Endothelial cell of umbilical vein (primary cell): ENCODE measurements at regions of chr10 and their contacts with region 1.

Region 1: GRCh38 chr10:110395725-110396651 is 91.3 kb upstream of the SMNDC1 start:
- DNase-seq: peak; percentile 99
- H3K4me3 ChIP-seq: no peak overlapping the region
- H3K27ac ChIP-seq: peak overlapping the region; percentile 91
- H3K4me1 ChIP-seq: peaks cover 58% of the 10 kb centered on the region
- H3K27me3 ChIP-seq: no peaks in the 10 kb centered on the region
- CTCF ChIP-seq: no peak
- POLR2A ChIP-seq: peak; percentile 24

Region 2: DNA sequence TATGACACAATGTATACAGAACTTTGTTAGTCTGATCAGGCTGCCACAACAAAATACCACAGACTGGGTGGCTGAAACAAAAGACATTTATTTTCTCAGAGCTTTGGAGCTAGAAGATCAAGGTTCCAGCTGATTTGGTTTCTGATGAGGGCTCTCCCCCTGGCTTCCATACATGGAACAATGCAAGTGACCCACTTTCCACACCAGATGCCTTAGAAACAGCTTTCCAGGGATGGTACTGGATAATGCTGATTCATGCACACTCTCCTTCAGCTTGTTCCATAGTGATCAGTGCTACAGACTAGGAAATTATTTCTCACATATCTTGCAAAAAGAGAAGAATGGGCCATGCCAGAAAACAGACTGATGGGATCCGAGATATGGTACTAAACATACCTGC is 1956.6 kb before region 1 on chr10:
- CTCF ChIA-PET with region 1: no interaction called
- POLR2A ChIA-PET with region 1: no interaction called
- dilution Hi-C with region 1: no loop called
- intact Hi-C with region 1: no loop called
- DNase-seq: no peak
- H3K4me3 ChIP-seq: no peak overlapping the region
- H3K27ac ChIP-seq: no peak overlapping the region
- H3K4me1 ChIP-seq: no peaks in the 10 kb centered on the region
- H3K27me3 ChIP-seq: no peaks in the 10 kb centered on the region
- CTCF ChIP-seq: no peak
- POLR2A ChIP-seq: no peak

Region 3: GRCh38 chr10:110304780-110305421 is 91.1 kb before region 1 on chr10 and contains the start of gene SMNDC1:
- CTCF ChIA-PET with region 1: no interaction called
- POLR2A ChIA-PET with region 1: no interaction called
- dilution Hi-C with region 1: no loop called
- intact Hi-C with region 1: loop called (anchors 1 kb)
- DNase-seq: peak; percentile 99
- H3K4me3 ChIP-seq: peak within 1 kb of the TSS; percentile 95 to 99 (median 99)
- H3K27ac ChIP-seq: peak within 1 kb of the TSS; percentile 97
- H3K4me1 ChIP-seq: peaks cover 47% of the 10 kb centered on the region
- H3K27me3 ChIP-seq: no peaks in the 10 kb centered on the region
- CTCF ChIP-seq: no peak
- POLR2A ChIP-seq: peak; percentile 51
- total RNA-seq, gene SMNDC1: 38.5 and 39.3 TPM in 2 replicates

Region 4: GRCh38 chr10:110345286-110345685 is 50.7 kb before region 1 on chr10:
- CTCF ChIA-PET with region 1: no interaction called
- POLR2A ChIA-PET with region 1: no interaction called
- dilution Hi-C with region 1: no loop called
- intact Hi-C with region 1: no loop called
- DNase-seq: no peak
- H3K4me3 ChIP-seq: no peak overlapping the region
- H3K27ac ChIP-seq: no peak overlapping the region
- H3K4me1 ChIP-seq: no peaks in the 10 kb centered on the region
- H3K27me3 ChIP-seq: peaks cover 0 to 5% of the 10 kb centered on the region in 2 experiments
- CTCF ChIP-seq: no peak
- POLR2A ChIP-seq: no peak

Region 5: DNA sequence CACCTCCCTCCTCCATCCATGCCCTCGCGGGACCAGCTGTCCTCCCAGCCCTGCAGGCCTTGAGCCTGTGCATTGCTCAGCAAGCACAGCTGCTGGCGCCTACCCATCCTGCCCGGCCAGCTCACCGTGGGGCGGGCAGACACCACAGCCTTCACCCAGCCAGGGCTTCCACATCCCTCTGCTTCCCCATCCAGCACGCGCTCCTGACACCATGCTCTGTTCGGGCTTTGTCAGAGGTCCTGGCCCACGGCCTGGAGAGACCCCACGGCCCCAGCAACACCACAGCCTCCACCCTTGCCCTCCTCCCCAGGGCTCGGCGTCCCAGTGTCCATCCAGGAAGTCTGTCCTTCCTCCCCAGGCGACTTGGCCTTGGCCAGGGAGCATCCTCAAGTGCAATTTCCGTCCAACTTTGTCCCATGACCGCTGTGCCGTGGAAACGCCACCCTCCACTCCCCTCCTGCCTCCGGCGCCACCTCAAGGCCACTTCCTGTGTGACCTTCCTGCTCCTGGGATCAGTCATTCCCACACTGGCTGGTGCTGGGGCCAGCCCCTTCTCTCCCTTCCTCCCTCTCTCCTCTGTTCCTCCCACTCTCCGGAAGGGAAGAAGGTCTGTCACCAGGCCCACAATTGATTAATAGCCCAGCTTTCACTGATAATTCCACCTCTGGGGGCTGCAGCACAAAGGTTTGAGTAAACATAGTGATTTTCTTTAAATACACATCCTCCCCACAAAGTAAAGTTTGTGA is 19.8 kb before region 1 on chr10:
- CTCF ChIA-PET with region 1: interaction called, 3 read pairs
- POLR2A ChIA-PET with region 1: no interaction called
- dilution Hi-C with region 1: no loop called
- intact Hi-C with region 1: loop called (anchors 1 kb)
- DNase-seq: peak; percentile 55
- H3K4me3 ChIP-seq: no peak overlapping the region
- H3K27ac ChIP-seq: peak overlapping the region; percentile 31
- H3K4me1 ChIP-seq: peaks cover 36% of the 10 kb centered on the region
- H3K27me3 ChIP-seq: no peaks in the 10 kb centered on the region
- CTCF ChIP-seq: no peak
- POLR2A ChIP-seq: no peak

Region 6: GRCh38 chr10:110446954-110447608 is 51.1 kb after region 1 on chr10:
- CTCF ChIA-PET with region 1: interaction called, 3 read pairs
- POLR2A ChIA-PET with region 1: no interaction called
- dilution Hi-C with region 1: no loop called
- intact Hi-C with region 1: loop called (anchors 1 kb)
- DNase-seq: peak; percentile 87
- H3K4me3 ChIP-seq: no peak overlapping the region
- H3K27ac ChIP-seq: peak overlapping the region; percentile 74
- H3K4me1 ChIP-seq: peaks cover 17% of the 10 kb centered on the region
- H3K27me3 ChIP-seq: no peaks in the 10 kb centered on the region
- CTCF ChIP-seq: no peak
- POLR2A ChIP-seq: no peak

Region 7: DNA sequence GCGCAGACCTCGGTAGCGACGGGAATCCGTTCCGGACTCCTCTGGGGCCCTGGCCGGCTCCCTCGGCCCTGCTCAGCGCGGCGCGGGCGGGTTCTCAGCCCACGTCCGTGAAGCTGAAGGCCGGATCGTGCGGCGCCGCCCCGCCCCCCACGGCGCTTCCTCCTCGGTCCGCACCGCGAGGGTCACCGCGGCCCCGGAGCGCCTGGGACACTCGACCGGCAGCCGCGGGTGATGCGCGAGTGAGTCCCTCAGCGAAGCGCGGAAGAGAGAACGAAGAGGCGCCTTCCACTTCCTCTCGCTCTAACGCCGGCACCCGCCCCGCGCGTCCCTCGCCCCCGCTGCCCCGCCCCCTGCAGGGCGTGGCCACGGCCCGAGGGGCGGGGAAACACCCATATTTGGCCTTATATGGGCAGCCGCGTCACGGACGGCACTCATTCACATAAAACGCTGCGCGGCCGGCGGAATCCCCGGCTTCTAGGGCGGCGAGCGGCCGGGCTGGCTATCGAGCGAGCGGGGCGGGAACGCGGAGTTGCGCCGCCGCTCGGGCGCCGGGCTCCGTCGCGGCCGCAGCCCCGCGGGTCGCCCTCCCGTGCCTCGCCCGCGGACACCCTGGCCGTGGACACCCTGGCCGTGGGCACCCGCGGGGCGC is 101.6 kb after region 1 on chr10 and contains the start of gene DUSP5:
- CTCF ChIA-PET with region 1: interaction called, 8 read pairs
- POLR2A ChIA-PET with region 1: interaction called, 5 read pairs
- dilution Hi-C with region 1: no loop called
- intact Hi-C with region 1: loop called (anchors 1 kb)
- DNase-seq: peak; percentile 96
- H3K4me3 ChIP-seq: peak within 1 kb of the TSS; percentile 58 to 81 (median 77)
- H3K27ac ChIP-seq: peak within 1 kb of the TSS; percentile 94
- H3K4me1 ChIP-seq: peaks cover 48% of the 10 kb centered on the region
- H3K27me3 ChIP-seq: no peaks in the 10 kb centered on the region
- CTCF ChIP-seq: no peak
- POLR2A ChIP-seq: peak; percentile 93
- total RNA-seq, gene DUSP5: 12.2 and 12.6 TPM in 2 replicates

Region 8: GRCh38 chr10:110547139-110547761 is 151.3 kb after region 1 on chr10:
- CTCF ChIA-PET with region 1: interaction called, 5 read pairs
- POLR2A ChIA-PET with region 1: no interaction called
- dilution Hi-C with region 1: no loop called
- intact Hi-C with region 1: loop called (anchors 1 kb)
- DNase-seq: peak; percentile 61
- H3K4me3 ChIP-seq: no peak overlapping the region
- H3K27ac ChIP-seq: no peak overlapping the region
- H3K4me1 ChIP-seq: peaks cover 13% of the 10 kb centered on the region
- H3K27me3 ChIP-seq: peaks cover 1 to 4% of the 10 kb centered on the region in 2 experiments
- CTCF ChIP-seq: peak; percentile 63 to 68
- POLR2A ChIP-seq: no peak

Region 9: GRCh38 chr10:110739811-110740271 is 343.9 kb after region 1 on chr10:
- CTCF ChIA-PET with region 1: no interaction called
- POLR2A ChIA-PET with region 1: no interaction called
- dilution Hi-C with region 1: no loop called
- intact Hi-C with region 1: no loop called
- DNase-seq: no peak
- H3K4me3 ChIP-seq: no peak overlapping the region
- H3K27ac ChIP-seq: no peak overlapping the region
- H3K4me1 ChIP-seq: no peaks in the 10 kb centered on the region
- H3K27me3 ChIP-seq: peaks cover 2 to 7% of the 10 kb centered on the region in 2 experiments
- CTCF ChIP-seq: no peak
- POLR2A ChIP-seq: no peak

Region 10: DNA sequence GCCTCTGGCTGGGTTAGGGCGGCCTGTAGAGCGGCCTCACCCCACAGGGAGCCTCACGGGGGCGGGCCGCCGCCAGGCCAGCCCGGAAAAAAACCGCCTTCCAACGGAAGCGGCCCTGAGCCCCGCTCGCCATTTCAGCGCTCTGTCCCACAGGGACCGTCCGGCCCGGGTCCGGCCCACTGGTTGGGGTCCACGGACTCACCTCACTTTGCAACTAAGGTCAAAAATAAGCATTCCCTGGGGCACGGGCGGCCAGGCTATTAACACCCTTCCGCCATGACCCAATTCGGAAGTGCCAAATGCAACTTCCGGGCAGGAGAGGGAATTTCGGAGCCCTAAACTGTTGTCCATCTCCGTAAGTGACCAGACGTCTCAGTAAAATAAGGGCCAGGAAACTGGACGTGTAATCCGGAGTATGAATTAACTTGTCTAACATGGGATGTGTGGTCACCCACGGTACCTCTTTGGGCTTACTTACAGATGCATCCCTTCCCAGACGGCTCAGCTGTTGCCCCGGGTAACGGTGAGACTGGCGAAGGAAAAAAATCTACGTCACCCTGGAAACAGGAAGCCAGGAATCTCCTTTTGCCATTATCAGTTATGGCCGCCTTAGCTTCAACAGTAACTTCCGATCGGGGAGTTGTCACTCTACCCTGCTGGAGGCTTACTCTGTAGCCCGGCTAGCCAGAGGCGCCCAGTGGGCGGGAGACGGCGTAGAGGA is 522.8 kb after region 1 on chr10 and contains the start of gene BBIP1:
- CTCF ChIA-PET with region 1: no interaction called
- POLR2A ChIA-PET with region 1: no interaction called
- dilution Hi-C with region 1: no loop called
- intact Hi-C with region 1: loop called (anchors 5 kb)
- DNase-seq: peak; percentile 100
- H3K4me3 ChIP-seq: peak within 1 kb of the TSS; percentile 89 to 94 (median 93)
- H3K27ac ChIP-seq: peak within 1 kb of the TSS; percentile 98
- H3K4me1 ChIP-seq: peaks cover 20% of the 10 kb centered on the region
- H3K27me3 ChIP-seq: no peaks in the 10 kb centered on the region
- CTCF ChIP-seq: no peak
- POLR2A ChIP-seq: peak; percentile 91
- total RNA-seq, gene BBIP1: 32.8 and 34.9 TPM in 2 replicates